ENCODE measurements at regions of chr15 and their contacts with region 1.

Region 1: GRCh38 chr15:77533578-77534430 is 98.9 kb downstream of the LINGO1 start:
- DNase-seq: no peak
- H3K4me3 ChIP-seq: no peak overlapping the region
- H3K27ac ChIP-seq: no peak overlapping the region
- H3K4me1 ChIP-seq: peaks cover 0 to 27% of the 10 kb centered on the region in 2 experiments; a peak in 1 of 4 replicates
- H3K27me3 ChIP-seq: no peaks in the 10 kb centered on the region
- CTCF ChIP-seq: no peak
- EP300 ChIP-seq: no peak
- RAD21 ChIP-seq: no peak

Region 2: DNA sequence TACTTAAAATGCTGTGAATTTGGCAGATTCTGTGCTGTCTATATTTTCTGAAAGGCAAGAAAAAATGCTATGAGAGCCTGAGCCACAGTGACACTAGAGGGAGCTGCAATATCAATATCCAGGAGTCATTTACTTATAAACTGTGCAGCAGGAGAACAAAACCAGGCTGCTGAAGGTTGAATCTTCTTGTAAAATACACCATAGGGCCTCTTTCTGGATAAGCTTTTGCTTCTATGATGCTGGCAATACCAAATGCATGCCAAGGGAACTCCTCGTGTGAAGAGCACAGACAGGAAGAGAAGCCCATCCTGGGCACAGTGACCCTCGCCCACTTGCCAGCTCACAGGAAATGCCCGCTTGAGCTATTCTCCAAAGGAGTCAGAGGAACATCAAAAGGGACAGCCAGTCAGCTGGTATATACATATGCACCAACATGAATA is 414.9 kb before region 1 on chr15:
- CTCF ChIA-PET with region 1: interaction called, 13 read pairs
- POLR2A ChIA-PET with region 1: no interaction called
- DNase-seq: peak; percentile 55
- H3K4me3 ChIP-seq: no peak overlapping the region
- H3K27ac ChIP-seq: peak overlapping the region in 1 of 2 experiments; percentile 45; a peak in 3 of 4 replicates
- H3K4me1 ChIP-seq: peaks cover 3 to 5% of the 10 kb centered on the region in 2 experiments
- H3K27me3 ChIP-seq: no peaks in the 10 kb centered on the region
- CTCF ChIP-seq: peak; percentile 86
- EP300 ChIP-seq: no peak
- RAD21 ChIP-seq: peak; percentile 94

Region 3: DNA sequence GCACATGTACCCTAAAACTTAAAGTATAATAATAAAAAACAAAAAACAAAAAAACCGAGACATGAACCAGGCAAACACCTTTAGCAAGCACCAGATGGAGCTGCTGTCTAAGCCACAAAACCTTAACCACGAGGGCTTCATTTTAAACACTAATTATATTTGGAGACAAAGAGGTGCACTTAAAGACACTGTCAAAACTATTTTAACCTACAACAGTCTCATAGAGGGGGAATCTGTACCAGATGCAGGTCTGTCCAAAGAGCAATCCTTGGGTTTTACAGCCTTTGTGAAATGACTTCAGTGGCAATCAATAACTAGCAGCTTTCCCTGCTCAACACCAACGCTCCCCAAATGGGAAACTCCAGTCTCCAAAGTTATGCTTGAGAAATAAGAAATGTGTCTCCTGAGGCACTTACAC is 347.2 kb before region 1 on chr15:
- CTCF ChIA-PET with region 1: interaction called, 10 read pairs
- POLR2A ChIA-PET with region 1: no interaction called
- DNase-seq: peak; percentile 33
- H3K4me3 ChIP-seq: no peak overlapping the region; a peak in 1 of 4 replicates
- H3K27ac ChIP-seq: no peak overlapping the region; a peak in 1 of 4 replicates
- H3K4me1 ChIP-seq: peaks cover 11 to 26% of the 10 kb centered on the region in 2 experiments; a peak in 3 of 4 replicates
- H3K27me3 ChIP-seq: no peaks in the 10 kb centered on the region
- CTCF ChIP-seq: peak; percentile 66
- EP300 ChIP-seq: no peak
- RAD21 ChIP-seq: peak; percentile 84

Region 4: GRCh38 chr15:77550292-77551251 is 16.8 kb after region 1 on chr15:
- CTCF ChIA-PET with region 1: no interaction called
- POLR2A ChIA-PET with region 1: no interaction called
- DNase-seq: no peak
- H3K4me3 ChIP-seq: no peak overlapping the region
- H3K27ac ChIP-seq: no peak overlapping the region
- H3K4me1 ChIP-seq: peaks cover 7 to 19% of the 10 kb centered on the region in 2 experiments; a peak in 2 of 4 replicates
- H3K27me3 ChIP-seq: no peaks in the 10 kb centered on the region
- CTCF ChIP-seq: no peak
- EP300 ChIP-seq: no peak
- RAD21 ChIP-seq: no peak